Caco-2 (cell line): ENCODE measurements at regions of chr20 and their contacts with region 1.

Region 1: GRCh38 chr20:53677447-53678314 is 84.0 kb upstream of the ZNF217 start:
- DNase-seq: peak; percentile 97 to 99
- H3K4me3 ChIP-seq: peak overlapping the region; percentile 2; the same call in 1 of the 2 replicates
- H3K4me3 Mint-ChIP-seq: peak overlapping the region; percentile 73
- H3K27ac Mint-ChIP-seq: peak overlapping the region; percentile 88
- H3K4me1 ChIP-seq: peaks cover 52% of the 10 kb centered on the region
- H3K4me1 Mint-ChIP-seq: peaks cover 43% of the 10 kb centered on the region
- H3K27me3 ChIP-seq: no peaks in the 10 kb centered on the region
- H3K27me3 Mint-ChIP-seq: no peaks in the 10 kb centered on the region
- CTCF ChIP-seq: peak; percentile 76 to 84

Region 2: DNA sequence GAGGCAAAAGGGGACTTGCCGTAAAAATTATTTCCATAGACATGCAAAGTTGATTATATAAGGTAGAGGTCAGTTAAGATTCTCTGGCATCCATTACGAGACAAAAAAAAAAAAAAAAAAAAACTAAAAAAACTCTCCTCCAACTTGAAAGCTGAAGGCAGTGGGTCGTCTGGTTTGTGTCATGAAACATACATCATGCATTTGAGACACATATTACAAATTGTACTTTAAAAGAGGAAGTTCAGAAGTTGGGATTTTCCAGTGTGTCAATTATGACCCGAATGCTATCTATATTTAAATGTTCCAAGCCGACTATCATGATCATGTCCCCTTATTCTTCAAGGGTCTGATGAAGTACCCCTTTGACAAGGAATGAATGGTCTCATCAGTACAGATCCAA is 209.1 kb before region 1 on chr20:
- CTCF ChIA-PET with region 1: no interaction called
- POLR2A ChIA-PET with region 1: no interaction called
- intact Hi-C with region 1: no loop called
- DNase-seq: no peak
- H3K4me3 ChIP-seq: no peak overlapping the region
- H3K4me3 Mint-ChIP-seq: no peak overlapping the region
- H3K27ac Mint-ChIP-seq: no peak overlapping the region
- H3K4me1 ChIP-seq: no peaks in the 10 kb centered on the region
- H3K4me1 Mint-ChIP-seq: no peaks in the 10 kb centered on the region
- H3K27me3 ChIP-seq: no peaks in the 10 kb centered on the region
- H3K27me3 Mint-ChIP-seq: no peaks in the 10 kb centered on the region
- CTCF ChIP-seq: no peak

Region 3: DNA sequence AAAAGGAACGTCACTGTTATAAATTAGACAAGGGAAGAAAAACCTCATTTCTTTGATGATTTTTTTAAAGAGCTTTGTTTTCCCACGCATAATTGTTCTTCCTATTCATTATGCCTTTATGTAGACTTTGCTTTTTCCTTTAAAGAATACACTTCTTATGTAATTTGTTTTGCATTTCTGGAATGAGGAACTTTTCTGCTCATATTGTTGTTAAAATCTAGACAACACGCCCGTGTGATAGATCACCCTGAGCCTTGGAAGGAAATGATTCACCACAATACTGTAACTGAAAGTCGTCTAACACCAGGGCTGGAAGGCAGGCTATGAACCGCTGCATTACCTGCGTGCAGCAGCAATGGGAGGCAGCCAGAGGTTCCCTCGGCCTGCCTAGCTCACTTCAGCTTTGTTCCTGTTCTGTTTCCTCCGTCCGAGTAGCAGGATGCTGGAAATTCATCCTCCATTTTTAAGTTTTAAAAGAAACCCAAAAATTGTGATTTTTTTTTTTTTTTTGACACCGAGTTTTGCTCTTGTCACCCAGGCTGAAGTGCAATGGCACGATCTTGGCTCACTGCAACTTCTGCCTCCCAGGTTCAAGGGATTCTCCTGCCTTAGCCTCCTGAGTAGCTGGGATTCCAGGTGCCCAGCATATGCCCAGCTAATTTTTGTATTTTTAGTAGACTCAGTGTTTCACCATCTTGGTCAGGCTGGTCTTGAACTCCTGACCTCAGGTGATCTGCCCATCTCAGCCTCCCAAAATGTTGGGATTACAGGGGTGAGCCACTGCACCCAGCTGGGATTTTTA is 34.4 kb before region 1 on chr20:
- CTCF ChIA-PET with region 1: interaction called, 6 read pairs
- POLR2A ChIA-PET with region 1: interaction called, 6 read pairs
- intact Hi-C with region 1: loop called (anchors 1 kb)
- DNase-seq: peak; percentile 37 to 54
- H3K4me3 ChIP-seq: no peak overlapping the region
- H3K4me3 Mint-ChIP-seq: no peak overlapping the region
- H3K27ac Mint-ChIP-seq: peak overlapping the region; percentile 28
- H3K4me1 ChIP-seq: peaks cover 30% of the 10 kb centered on the region
- H3K4me1 Mint-ChIP-seq: peaks cover 31% of the 10 kb centered on the region
- H3K27me3 ChIP-seq: no peaks in the 10 kb centered on the region
- H3K27me3 Mint-ChIP-seq: no peaks in the 10 kb centered on the region
- CTCF ChIP-seq: no peak

Region 4: DNA sequence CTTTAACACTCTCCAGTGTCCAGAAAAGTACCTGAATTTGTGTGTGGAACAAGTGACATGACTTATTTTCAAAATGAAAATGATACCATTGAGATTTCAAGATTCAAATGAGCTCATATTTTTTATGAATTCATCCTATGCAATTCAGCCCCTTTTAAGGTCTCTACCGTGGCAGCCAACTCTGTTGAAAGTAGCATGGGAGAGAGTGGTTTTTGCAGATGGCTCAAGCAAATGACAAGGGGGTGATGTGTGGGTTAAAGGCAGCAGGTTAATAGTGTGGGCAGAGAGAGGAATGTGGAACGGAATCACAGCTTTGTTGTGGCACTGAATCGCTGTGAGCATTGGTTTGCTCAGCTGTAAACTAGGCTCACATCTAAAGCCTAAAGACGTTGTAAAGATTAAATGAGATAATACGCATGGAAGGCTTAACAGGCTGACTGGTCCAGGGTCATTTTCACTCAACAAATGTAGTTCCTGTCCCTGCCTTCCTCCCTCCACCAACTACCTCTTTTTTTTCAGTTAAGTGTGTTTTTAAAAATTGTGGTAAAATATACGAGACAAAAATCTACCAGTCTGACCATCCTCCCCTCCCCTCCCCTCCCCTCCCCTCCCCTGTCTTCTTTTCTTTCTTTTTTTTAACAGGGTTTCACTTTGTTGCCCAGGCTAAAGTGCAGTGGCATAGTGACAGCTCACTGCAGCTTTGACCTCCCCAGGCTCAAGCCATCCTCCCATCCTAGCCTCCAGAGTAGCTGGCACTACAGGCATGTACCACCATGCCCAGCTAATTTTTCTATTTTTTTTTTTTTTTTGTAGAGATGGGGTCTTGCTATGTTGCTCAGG is 30.7 kb after region 1 on chr20:
- CTCF ChIA-PET with region 1: interaction called, 6 read pairs
- POLR2A ChIA-PET with region 1: interaction called, 4 read pairs
- intact Hi-C with region 1: loop called (anchors 1 kb)
- DNase-seq: peak; percentile 54 to 71
- H3K4me3 ChIP-seq: no peak overlapping the region
- H3K4me3 Mint-ChIP-seq: peak overlapping the region; percentile 39
- H3K27ac Mint-ChIP-seq: peak overlapping the region; percentile 66
- H3K4me1 ChIP-seq: peaks cover 47% of the 10 kb centered on the region
- H3K4me1 Mint-ChIP-seq: peaks cover 43% of the 10 kb centered on the region
- H3K27me3 ChIP-seq: no peaks in the 10 kb centered on the region
- H3K27me3 Mint-ChIP-seq: no peaks in the 10 kb centered on the region
- CTCF ChIP-seq: no peak

Region 5: DNA sequence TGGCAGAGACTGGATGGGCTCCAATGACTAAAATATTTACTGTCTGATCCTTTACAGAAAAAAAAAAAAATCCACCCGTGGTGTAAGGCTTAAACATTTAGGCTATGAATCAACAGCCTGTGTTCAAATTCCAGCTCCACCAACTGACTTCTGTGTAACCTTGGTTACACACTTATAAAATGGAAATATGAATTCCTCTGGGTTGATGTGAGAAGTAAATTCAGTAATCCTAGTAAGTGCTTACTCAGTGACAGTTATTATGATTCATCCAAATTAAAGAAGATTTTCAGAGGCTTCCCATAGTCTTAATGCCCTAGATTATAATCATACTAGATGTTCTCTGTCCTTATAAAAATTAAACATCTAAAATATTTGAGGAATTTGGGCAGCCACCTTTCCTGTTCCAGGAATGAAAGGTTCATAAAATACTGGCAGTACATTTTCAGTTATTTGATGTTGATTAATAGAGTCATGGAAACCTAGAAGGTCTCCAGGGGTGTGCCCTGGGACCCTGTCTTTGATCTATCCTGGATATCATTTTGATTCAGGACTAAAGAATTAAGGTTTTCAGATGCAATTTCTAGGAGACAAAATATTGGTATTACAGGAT is 96.2 kb after region 1 on chr20:
- CTCF ChIA-PET with region 1: no interaction called
- POLR2A ChIA-PET with region 1: no interaction called
- intact Hi-C with region 1: loop called (anchors 1 kb)
- DNase-seq: peak; percentile 29 to 52
- H3K4me3 ChIP-seq: no peak overlapping the region
- H3K4me3 Mint-ChIP-seq: peak overlapping the region; percentile 22
- H3K27ac Mint-ChIP-seq: peak overlapping the region; percentile 66
- H3K4me1 ChIP-seq: peaks cover 60% of the 10 kb centered on the region
- H3K4me1 Mint-ChIP-seq: peaks cover 64% of the 10 kb centered on the region
- H3K27me3 ChIP-seq: no peaks in the 10 kb centered on the region
- H3K27me3 Mint-ChIP-seq: no peaks in the 10 kb centered on the region
- CTCF ChIP-seq: no peak

Region 6: DNA sequence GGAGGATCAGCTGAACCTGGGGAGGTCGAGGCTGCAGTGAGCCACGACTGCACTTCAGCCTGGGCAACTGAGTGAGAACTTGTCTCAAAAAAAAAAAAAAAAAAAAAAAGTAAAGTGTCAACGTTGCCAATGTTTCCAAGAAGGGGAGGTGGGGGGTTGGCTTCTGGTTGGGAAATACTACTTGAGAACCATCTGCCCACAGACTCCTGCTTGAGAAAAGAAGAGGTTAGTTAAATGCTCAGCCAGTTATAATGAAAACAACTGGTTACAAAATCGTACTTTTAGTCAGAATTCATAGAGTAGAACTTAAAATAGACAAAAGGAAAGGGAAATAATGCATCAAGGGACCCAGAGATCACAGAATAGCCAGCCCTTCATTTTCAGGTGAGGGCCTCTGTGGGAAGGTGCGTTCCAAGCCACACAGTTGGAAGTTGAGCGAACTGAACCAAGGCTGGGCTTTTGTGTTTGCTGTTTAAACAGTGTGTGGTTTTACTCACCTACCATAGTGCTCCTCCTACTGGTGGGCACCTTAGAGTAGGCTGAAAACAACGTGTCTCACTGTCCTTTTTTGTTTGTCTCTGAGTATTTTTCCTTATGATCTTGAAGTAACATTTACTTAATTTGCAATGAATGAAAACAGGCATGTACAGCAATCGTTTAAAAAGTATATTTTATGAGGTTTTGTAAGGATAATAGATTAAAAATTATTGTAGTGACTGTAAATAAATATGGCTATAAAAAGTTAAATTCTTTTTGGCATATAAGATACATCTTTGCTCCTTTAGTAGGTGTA is 192.0 kb after region 1 on chr20:
- CTCF ChIA-PET with region 1: no interaction called
- POLR2A ChIA-PET with region 1: interaction called, 3 read pairs
- intact Hi-C with region 1: loop called (anchors 1 kb)
- DNase-seq: peak; percentile 94
- H3K4me3 ChIP-seq: no peak overlapping the region
- H3K4me3 Mint-ChIP-seq: peak overlapping the region; percentile 29
- H3K27ac Mint-ChIP-seq: peak overlapping the region; percentile 45
- H3K4me1 ChIP-seq: peaks cover 59% of the 10 kb centered on the region
- H3K4me1 Mint-ChIP-seq: peaks cover 63% of the 10 kb centered on the region
- H3K27me3 ChIP-seq: no peaks in the 10 kb centered on the region
- H3K27me3 Mint-ChIP-seq: no peaks in the 10 kb centered on the region
- CTCF ChIP-seq: peak; percentile 99 to 100

Region 7: GRCh38 chr20:54062812-54063280 is 385.2 kb after region 1 on chr20:
- CTCF ChIA-PET with region 1: no interaction called
- POLR2A ChIA-PET with region 1: no interaction called
- intact Hi-C with region 1: loop called (anchors 10 kb)
- DNase-seq: peak in 1 of 2 experiments; percentile 63
- H3K4me3 ChIP-seq: no peak overlapping the region
- H3K4me3 Mint-ChIP-seq: no peak overlapping the region
- H3K27ac Mint-ChIP-seq: no peak overlapping the region
- H3K4me1 ChIP-seq: peaks cover 19% of the 10 kb centered on the region
- H3K4me1 Mint-ChIP-seq: peaks cover 5% of the 10 kb centered on the region
- H3K27me3 ChIP-seq: no peaks in the 10 kb centered on the region
- H3K27me3 Mint-ChIP-seq: no peaks in the 10 kb centered on the region
- CTCF ChIP-seq: peak; percentile 92